Activated T-helper 2 cell treated with anti-CD3 and anti-CD28 coated beads, Interferon-gamma antibody, Interleukin-2, Interleukin-4, amounts not matched to agents 10 μg/mL and 5 μg/mL and 100 μg/mL, durations not matched to agents 14 hours and 24 hours and 36 hours (primary cell): ENCODE measurements at regions of chrX and their contacts with region 1.

Region 1: DNA sequence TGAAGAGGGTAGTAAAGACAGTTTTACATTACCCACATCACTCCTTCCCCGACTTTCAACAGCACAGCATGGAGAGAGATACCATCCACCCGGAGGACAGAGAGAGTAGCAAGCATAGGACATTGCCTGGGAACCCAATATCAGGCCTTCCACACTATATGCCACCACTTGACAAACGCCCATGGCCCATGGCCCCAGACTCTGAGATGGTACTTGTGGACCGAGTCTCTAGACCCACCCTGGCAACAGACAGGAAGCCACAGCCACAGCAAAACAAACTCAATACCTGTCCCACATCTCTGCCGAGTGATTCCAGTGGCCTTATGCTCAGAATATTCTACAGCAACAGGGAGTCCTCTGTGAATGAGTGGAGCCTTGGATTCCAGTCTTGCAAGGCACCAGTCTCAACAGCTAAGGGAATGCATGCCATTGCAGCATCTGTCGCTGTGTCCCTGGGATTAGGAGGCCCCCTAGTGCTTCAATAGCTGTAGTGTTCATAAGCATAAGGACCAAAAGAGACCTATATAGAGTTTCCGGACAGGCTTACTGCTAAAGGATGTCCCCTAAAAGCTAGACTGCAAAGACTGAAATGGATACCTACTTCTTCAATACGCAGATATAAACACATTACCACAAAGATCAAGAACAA is 14.7 kb upstream of the CT55 start:
- DNase-seq: peak; percentile 8
- H3K4me3 Mint-ChIP-seq: no peak overlapping the region
- H3K27ac Mint-ChIP-seq: no peak overlapping the region
- H3K4me1 Mint-ChIP-seq: peaks cover 2% of the 10 kb centered on the region
- H3K27me3 Mint-ChIP-seq: peaks cover 46% of the 10 kb centered on the region

Region 2: DNA sequence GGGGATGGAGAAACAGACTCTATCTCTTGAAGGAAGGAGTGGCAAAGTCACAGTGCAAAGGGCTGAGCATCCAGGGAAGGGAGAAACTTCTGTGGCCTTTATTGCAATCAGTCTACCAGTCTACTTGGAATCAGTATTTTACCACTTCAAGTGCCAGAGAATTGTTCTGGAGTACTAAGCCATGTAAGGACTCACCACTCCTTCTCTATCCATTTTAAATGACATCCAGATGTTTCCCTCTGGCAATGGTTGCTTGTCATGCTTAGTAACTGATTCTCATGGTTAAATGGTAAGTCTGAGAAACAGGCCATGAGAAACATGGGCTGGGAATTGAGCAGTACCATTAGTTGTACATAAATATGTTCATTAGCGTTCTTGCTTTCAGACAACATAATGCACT is 216.2 kb before region 1 on chrX:
- intact Hi-C with region 1: loop called (anchors 5 kb)
- DNase-seq: no peak
- H3K4me3 Mint-ChIP-seq: no peak overlapping the region
- H3K27ac Mint-ChIP-seq: no peak overlapping the region
- H3K4me1 Mint-ChIP-seq: no peaks in the 10 kb centered on the region
- H3K27me3 Mint-ChIP-seq: peaks cover 3% of the 10 kb centered on the region

Region 3: DNA sequence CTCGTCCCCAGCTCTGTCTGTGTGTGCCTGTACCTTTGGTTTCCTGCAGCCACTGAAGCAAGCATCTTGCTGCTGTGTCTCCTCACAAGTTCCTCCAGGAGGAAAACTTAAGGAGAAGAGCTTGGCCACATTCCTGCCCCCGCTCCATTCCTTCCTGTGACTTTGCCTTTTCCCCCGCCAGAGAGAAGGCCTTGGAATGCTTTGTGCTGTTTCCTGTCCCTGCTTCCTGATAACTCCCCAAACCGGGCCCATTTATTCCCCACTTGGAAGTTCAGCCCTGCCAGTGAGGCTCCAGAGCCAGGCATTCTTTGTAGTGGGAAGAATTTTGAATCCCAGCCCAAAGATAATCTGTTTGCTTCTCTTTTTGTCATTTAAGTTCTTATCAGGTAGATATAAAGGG is 268.9 kb after region 1 on chrX:
- intact Hi-C with region 1: no loop called
- DNase-seq: no peak
- H3K4me3 Mint-ChIP-seq: no peak overlapping the region
- H3K27ac Mint-ChIP-seq: no peak overlapping the region
- H3K4me1 Mint-ChIP-seq: no peaks in the 10 kb centered on the region
- H3K27me3 Mint-ChIP-seq: peaks cover 13% of the 10 kb centered on the region

Region 4: GRCh38 chrX:135477576-135477975 is 291.7 kb after region 1 on chrX:
- intact Hi-C with region 1: loop called (anchors 1 kb)
- DNase-seq: peak; percentile 19
- H3K4me3 Mint-ChIP-seq: no peak overlapping the region
- H3K27ac Mint-ChIP-seq: no peak overlapping the region
- H3K4me1 Mint-ChIP-seq: peaks cover 5% of the 10 kb centered on the region
- H3K27me3 Mint-ChIP-seq: peaks cover 24% of the 10 kb centered on the region

Region 5: GRCh38 chrX:135596495-135596894 is 410.6 kb after region 1 on chrX:
- intact Hi-C with region 1: loop called (anchors 5 kb)
- DNase-seq: peak; percentile 14
- H3K4me3 Mint-ChIP-seq: no peak overlapping the region
- H3K27ac Mint-ChIP-seq: no peak overlapping the region
- H3K4me1 Mint-ChIP-seq: peaks cover 3% of the 10 kb centered on the region
- H3K27me3 Mint-ChIP-seq: peaks cover 18% of the 10 kb centered on the region